Posterior cingulate gyrus (tissue), 11 donors: ENCODE measurements at regions of chr2 and their contacts with region 1.

Region 1: DNA sequence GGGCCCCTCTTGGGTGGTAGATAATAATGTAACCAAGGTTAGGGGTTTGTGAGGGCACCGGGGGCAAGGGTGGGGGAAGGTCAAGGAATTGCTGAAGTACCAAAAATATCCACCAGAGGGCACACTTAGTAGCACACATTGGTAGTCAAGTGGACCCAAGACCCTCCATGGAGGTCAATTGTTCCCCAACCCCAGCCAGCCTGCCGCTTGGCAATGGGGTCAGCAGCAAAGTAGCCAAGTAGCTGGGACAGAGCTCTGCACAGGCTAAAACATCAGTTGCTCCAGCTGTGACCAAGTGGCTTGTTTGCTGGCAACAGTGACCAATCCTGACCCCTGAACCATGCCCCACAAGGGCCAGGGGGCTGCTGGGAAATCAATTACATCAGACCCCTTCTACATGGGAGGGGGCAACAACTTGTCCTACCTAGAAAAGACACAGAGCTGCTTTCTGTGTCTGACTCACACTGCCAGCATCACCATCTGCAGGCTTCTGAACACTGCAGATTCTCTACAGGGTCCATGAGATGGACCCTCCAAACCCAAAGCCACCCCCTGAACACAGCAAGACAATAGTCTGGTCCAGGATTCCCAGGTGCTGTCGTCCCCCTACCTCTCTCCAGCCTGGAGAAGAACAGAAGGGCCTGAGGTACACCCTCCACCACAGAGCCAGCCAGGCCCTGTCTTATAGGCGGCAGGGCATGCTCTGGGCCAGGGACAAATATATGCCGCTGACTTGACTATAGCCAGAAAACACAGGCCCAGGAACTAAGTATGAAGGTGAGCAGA is 76.0 kb downstream of the EMX1 start:
- DNase-seq: peak in 1 of 10 donors; percentile 56

Region 2: GRCh38 chr2:73071360-73072133 is 78.2 kb after region 1 on chr2 and contains the start of gene SFXN5:
- intact Hi-C with region 1: loop called (anchors 5 kb)
- DNase-seq: peak; percentile 97 to 100 (median 99)

Region 3: GRCh38 chr2:73176881-73177644 is 183.7 kb after region 1 on chr2:
- intact Hi-C with region 1: loop called (anchors 5 kb)
- DNase-seq: peak; percentile 80 to 98 (median 91)